ENCODE measurements at regions of chr15 and their contacts with region 1.

Region 1: GRCh38 chr15:25345943-25346342 is 92.9 kb downstream of the UBE3A start:
- DNase-seq: peak; percentile 75
- ATAC-seq: peak; percentile 99

Region 2: DNA sequence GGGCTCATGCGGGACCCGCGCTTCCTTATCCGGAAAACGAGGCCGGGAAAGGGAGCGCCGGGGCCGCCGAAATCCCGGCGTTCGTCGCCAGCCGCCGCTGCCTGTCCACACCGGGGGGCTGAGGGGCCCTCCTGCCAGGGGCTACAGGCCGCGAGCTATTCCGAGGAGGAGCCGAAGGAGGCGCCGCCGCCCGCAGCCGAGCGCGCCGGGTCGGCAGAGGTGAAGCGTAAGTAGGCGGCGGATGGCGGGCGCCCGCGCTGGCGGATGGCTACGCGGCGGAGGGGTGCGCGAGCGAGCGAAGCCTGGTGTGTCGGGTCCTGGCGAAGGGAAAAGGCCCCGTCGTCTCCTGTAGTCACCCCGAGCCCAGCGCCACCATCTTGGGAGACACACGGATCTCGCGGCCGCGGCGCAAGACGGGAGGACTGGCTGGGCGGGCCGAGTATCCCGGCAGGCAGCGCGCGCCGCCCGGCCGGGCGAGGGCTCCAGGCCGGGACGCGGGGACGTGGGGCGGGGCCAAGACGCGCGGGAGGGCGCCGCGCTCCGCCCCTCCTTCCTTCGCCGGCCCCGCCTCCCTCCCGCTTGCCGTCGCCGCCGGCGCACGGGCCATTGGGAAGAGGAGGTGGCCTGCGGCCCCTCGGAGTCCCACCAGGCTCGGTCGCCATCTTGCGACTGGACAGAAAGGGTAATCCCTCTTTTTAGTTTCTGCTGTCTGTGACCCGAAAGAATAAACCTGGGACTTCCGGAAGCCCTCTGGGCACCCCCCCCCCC is 92.8 kb after region 1 on chr15 and contains the start of gene UBE3A:
- intact Hi-C with region 1: loop called (anchors 10 kb)
- DNase-seq: peak; percentile 94
- ATAC-seq: peak; percentile 99
- total RNA-seq, gene UBE3A: 92.4 TPM

Region 3: GRCh38 chr15:25464784-25465183 is 118.8 kb after region 1 on chr15:
- intact Hi-C with region 1: no loop called
- DNase-seq: no peak
- ATAC-seq: no peak